ENCODE measurements at regions of chr7 and their contacts with region 1.

Region 1: DNA sequence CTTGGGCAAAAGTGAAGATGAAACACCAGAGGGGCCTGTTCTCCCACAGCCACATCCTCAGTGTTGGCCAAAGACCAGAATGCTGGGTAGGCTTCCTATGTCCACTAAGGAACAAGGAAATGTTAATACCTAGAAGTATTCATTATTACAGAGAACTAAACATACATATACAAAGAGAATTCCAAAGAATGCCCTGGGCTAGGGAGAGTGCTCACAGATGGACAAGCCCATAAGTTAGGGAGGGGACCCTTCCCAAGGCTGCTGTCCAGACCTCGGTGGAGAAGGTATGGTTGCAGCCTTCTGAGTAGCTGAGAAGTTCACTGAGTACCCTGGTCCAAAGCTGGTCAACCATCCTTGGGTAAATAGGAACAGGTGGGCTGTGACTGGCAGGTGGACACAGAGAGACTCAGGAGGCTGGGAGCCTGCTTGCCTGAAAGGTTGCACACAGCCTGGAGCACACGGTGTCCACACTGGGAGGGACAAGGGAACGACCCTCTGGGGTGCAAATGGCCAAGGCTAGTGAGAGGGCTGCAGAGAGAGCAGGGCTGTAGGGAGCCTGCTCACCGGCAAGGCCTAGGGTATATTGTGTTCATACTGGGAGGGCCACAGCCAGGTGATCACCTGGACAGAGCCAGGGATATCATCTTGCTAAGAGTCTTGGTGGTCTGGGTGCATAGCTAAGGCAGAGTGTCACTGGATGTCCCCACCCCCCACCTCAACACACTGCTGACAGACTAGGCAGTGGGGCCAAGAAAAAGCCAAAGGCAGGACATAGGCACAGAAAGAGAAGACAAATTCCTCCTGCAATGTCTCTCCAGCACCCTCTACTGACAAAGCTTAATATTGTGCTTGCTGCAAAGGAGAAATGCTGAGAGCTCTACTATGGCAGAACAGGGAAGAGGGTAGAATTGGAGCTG is 40.3 kb downstream of the CPVL start:
- DNase-seq: peak in 27 of 42 donors; percentile 12 to 79 (median 55)

Region 2: GRCh38 chr7:28921822-28922221 is 184.2 kb before region 1 on chr7:
- intact Hi-C with region 1: loop called (anchors 2 kb)
- DNase-seq: peak in 39 of 42 donors; percentile 5 to 88 (median 68)

Region 3: DNA sequence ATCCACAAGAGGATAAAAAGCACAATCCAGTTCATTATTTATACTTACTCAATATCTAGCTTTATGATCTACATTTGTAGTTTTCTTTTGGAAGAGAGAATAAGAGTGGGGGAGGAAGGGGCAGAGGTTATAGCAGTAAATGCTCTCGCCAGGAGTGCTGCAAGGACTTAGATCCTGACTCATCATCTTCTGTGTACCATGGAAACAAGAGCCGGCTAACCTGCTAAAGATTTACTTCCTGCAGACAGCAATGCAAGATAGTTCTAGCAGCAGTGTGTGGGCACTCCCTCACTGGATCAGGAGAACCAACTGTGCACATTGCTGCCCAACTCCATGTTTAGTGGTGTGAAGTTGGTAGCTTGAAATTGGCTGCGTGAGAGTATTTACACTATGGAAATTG is 100.2 kb before region 1 on chr7:
- intact Hi-C with region 1: no loop called
- DNase-seq: no peak

Region 4: GRCh38 chr7:29657856-29658255 is 551.8 kb after region 1 on chr7:
- intact Hi-C with region 1: no loop called
- DNase-seq: no peak

Measured in head of caudate nucleus (tissue), 42 donors.